Heart left ventricle (tissue), 16 donors: ENCODE measurements at regions of chr5 and their contacts with region 1.

Region 1: DNA sequence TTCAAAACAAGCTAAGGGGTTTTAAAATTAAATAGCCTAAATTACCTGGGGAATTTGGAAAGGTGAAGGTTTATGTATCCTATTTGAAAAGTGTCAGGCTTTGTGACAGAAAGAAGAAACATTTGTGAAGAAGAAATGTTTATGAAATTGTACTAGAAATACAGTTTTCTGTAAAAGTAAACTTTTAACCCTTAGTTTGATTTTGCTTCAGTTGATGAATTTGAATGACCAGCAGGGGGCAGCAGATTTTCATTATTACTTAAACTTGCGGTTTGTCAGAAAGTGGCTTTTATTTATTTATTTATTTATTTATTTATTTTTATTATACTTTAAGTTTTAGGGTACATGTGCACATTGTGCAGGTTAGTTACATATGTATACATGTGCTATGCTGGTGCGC is 58.1 kb downstream of the NNT start:
- DNase-seq: no peak
- ATAC-seq: no peak
- H3K4me3 ChIP-seq: no peak overlapping the region
- H3K27ac ChIP-seq: no peak overlapping the region
- H3K4me1 ChIP-seq: peaks cover 0 to 12% (median 2%) of the 10 kb centered on the region in 12 donors
- H3K27me3 ChIP-seq: no peaks in the 10 kb centered on the region
- CTCF ChIP-seq: peak; percentile 36 to 58 (median 48)
- POLR2A ChIP-seq: no peak

Region 2: DNA sequence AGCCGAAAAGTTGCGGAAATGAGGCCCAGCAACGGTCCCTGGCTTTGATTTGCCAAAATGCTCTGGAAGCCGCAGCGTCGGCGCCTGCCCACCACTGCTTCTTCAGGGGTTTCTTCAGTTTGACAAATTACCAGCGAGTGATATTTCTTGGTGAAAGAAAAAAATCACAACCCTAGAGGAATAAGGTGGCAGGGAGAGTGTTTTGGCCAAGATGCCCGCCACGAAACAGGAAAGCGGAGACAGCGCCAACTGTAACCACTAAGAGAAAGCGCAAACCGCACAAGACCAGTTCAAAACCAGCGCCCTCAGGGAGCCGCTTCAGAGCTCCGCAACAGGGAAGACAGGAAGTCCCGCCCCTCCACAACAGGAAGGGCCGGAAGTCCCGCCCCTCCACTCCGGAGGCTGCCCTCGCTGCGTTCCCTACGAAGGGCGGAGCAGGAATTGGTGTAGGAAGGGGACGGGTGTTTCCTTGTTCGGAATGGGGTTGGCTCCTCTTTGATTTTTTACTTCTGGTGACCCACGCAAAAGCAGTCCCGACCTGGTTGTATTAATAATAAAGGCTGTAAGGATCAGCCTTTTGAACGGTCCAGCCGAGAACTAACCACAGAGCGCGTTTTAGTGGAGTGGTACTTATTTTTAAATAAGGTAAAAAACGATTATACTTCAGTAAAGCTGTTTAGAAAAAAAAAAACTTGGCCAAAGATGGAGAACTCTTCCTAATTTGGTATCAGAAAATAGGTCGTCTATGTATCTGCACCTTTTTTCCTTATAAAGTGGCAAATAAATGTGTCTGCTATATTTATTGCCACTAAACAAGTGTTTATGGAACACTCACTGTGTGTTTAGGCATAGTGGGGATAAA is 146.1 kb before region 1 on chr5 and contains the start of gene C5orf34:
- intact Hi-C with region 1: no loop called
- DNase-seq: peak; percentile 96 to 98 (median 97)
- ATAC-seq: peak; percentile 100
- H3K4me3 ChIP-seq: peak within 1 kb of the TSS; percentile 44 to 83 (median 64)
- H3K27ac ChIP-seq: peak within 1 kb of the TSS; percentile 18 to 97 (median 87)
- H3K4me1 ChIP-seq: peaks cover 0 to 21% (median 9%) of the 10 kb centered on the region in 12 donors
- H3K27me3 ChIP-seq: no peaks in the 10 kb centered on the region
- CTCF ChIP-seq: peak in 4 of 12 donors; percentile 3 to 19 (median 12)
- POLR2A ChIP-seq: peak in 1 of 2 donors; percentile 59
- total RNA-seq, gene C5orf34: 0.19 to 1.6 (median 0.60) TPM

Region 3: DNA sequence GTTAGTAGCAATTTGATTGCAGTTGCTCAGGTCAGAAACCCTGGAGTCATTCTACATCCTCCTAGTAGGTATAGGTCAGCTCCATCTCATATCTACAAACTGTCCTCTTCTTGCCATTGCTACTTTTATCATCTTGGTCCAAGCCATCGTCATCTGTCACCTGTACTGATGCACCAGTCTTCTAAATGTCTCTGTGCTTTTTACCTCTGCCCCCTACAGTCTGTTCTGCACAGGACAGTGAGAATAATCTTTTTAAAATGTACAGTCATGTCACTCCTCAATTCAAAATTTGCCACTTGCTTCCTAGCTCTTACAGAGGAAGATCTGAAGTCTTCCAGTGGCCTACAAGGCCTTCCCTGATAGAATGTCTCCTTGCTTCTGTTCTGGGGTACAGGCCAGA is 51.4 kb before region 1 on chr5:
- intact Hi-C with region 1: no loop called
- DNase-seq: no peak
- ATAC-seq: no peak
- H3K4me3 ChIP-seq: no peak overlapping the region
- H3K27ac ChIP-seq: no peak overlapping the region
- H3K4me1 ChIP-seq: peaks cover 0 to 39% (median 14%) of the 10 kb centered on the region in 12 donors
- H3K27me3 ChIP-seq: no peaks in the 10 kb centered on the region
- CTCF ChIP-seq: peak in 1 of 12 donors; percentile 23
- POLR2A ChIP-seq: no peak

Region 4: DNA sequence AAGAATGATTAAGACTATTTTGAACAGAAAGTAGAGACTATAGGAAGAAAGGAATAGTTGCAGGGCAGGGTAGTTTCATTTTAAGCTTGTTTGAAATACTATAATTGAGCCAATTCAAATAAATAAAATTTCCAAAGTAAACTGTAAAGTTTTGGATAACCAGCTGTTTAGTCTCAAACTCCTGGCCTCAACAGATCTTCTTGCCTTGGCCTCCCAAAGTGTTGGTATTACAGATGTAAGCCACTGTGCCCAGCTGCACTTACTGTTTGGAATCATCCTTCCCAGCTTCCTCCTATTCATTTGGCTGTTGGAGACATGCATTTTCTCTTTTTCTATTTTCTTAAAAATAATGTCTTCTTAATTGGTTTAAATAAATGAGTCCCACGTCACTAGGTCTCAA is 172.9 kb after region 1 on chr5:
- intact Hi-C with region 1: loop called in 1 of 10 experiments (anchors 10 kb)
- DNase-seq: no peak
- ATAC-seq: peak in 1 of 4 donors; percentile 41
- H3K4me3 ChIP-seq: no peak overlapping the region
- H3K27ac ChIP-seq: no peak overlapping the region
- H3K4me1 ChIP-seq: no peaks in the 10 kb centered on the region
- H3K27me3 ChIP-seq: no peaks in the 10 kb centered on the region
- CTCF ChIP-seq: no peak
- POLR2A ChIP-seq: no peak

Region 5: DNA sequence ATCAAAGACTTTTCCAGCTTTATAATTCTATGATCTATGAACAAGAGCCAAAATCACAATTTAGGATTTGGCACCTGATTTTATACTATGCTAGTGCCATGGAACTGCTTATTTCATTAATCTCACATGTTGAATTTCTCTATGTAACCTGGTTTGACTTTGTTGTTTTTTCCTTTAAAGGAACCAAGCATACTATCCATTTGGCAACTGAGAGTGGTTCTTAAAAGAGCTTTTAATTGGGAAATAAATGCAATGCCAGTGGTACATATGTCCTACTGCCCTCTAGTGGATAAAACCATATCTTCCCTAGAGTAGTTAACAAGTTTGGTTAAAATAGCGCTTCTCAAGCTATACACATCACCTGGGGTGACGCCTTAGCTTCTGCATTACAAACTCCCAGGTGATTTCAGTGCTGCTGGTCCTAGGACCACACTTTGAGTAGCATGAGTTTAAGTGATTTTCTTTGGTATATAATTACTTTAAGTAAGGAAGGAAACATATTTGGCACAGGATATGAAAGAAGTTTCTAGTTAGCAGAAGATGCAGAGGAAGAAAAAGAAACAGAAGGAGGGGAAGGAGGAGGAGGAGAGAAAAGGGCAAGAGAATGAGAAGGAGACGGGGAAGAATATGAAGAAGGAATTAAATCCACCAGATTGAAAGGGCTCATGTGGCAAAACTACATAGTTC is 671.3 kb after region 1 on chr5:
- intact Hi-C with region 1: loop called in 1 of 10 experiments (anchors 5 kb)
- DNase-seq: no peak
- ATAC-seq: peak in 3 of 4 donors; percentile 47 to 55 (median 49)
- H3K4me3 ChIP-seq: no peak overlapping the region
- H3K27ac ChIP-seq: peak overlapping the region in 1 of 12 donors; percentile 22
- H3K4me1 ChIP-seq: no peaks in the 10 kb centered on the region
- H3K27me3 ChIP-seq: no peaks in the 10 kb centered on the region
- CTCF ChIP-seq: peak; percentile 46 to 70 (median 58)
- POLR2A ChIP-seq: no peak

Region 6: GRCh38 chr5:44809956-44810420 is 1148.9 kb after region 1 on chr5:
- intact Hi-C with region 1: loop called in 1 of 10 experiments (anchors 5 kb)
- DNase-seq: no peak
- ATAC-seq: no peak
- H3K4me3 ChIP-seq: peak overlapping the region; percentile 65 to 99 (median 92)
- H3K27ac ChIP-seq: peak overlapping the region in 9 of 12 donors; percentile 82 to 95 (median 92)
- H3K4me1 ChIP-seq: peaks cover 5 to 37% (median 22%) of the 10 kb centered on the region in 12 donors
- H3K27me3 ChIP-seq: no peaks in the 10 kb centered on the region
- CTCF ChIP-seq: no peak
- POLR2A ChIP-seq: no peak